ENCODE measurements at regions of chr2 and their contacts with region 1.

Region 1: GRCh38 chr2:191677646-191678436 is at the start of gene NABP1:
- DNase-seq: peak; percentile 98
- H3K4me3 Mint-ChIP-seq: peak within 1 kb of the TSS; percentile 94
- H3K27ac Mint-ChIP-seq: peak within 1 kb of the TSS; percentile 98
- H3K4me1 Mint-ChIP-seq: peaks cover 63% of the 10 kb centered on the region
- H3K27me3 Mint-ChIP-seq: no peaks in the 10 kb centered on the region
- total RNA-seq, gene NABP1: 51.0 and 58.4 TPM in 2 replicates

Region 2: DNA sequence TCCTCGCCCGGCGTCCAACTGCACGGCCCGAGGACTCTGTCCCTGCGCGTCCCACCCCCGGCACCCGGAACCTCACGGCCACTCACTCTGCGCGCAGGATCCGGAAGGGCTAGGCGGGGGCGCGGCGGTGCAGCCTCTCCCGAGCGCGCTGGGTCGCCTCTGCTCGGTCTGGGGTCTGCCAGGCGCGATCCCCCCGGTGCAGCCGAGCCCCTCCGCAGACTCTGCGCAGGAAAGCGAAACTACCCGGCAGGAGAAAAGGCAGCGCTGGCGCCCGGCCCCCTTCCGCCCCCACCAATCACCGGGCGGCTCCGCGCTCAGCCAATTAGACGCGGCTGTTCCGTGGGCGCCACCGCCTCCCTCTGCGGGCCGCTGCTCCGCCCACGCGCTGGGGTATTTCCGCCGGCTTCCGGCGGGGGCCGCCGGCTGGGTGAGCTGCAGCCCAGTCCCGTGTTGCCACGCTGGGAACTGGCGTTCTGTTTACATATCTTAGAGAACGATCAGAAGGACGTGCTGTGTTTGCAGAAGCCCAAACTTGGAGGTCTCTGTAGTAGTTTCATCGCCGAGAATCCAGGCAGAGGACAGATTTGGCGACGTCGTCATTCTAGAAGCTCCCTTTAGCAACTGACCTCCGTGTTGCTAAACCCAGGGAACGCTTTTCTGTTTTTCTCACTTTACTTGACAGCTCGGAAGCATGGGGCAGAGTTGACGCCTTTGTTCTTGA is 663.7 kb before region 1 on chr2 and contains the start of gene STAT1:
- intact Hi-C with region 1: loop called (anchors 2 kb)
- DNase-seq: peak; percentile 97
- H3K4me3 Mint-ChIP-seq: no peak within 1 kb of the TSS
- H3K27ac Mint-ChIP-seq: no peak within 1 kb of the TSS
- H3K4me1 Mint-ChIP-seq: peaks cover 49% of the 10 kb centered on the region
- H3K27me3 Mint-ChIP-seq: no peaks in the 10 kb centered on the region
- total RNA-seq, gene STAT1: 129 and 136 TPM in 2 replicates

Region 3: GRCh38 chr2:191195021-191195420 is 482.8 kb before region 1 on chr2:
- intact Hi-C with region 1: loop called (anchors 2 kb)
- DNase-seq: no peak
- H3K4me3 Mint-ChIP-seq: peak overlapping the region; percentile 28
- H3K27ac Mint-ChIP-seq: peak overlapping the region; percentile 93
- H3K4me1 Mint-ChIP-seq: peaks cover 49% of the 10 kb centered on the region
- H3K27me3 Mint-ChIP-seq: no peaks in the 10 kb centered on the region

Region 4: GRCh38 chr2:191625016-191625415 is 52.8 kb before region 1 on chr2:
- intact Hi-C with region 1: loop called (anchors 2 kb)
- DNase-seq: peak; percentile 34
- H3K4me3 Mint-ChIP-seq: peak overlapping the region; percentile 19
- H3K27ac Mint-ChIP-seq: peak overlapping the region; percentile 42
- H3K4me1 Mint-ChIP-seq: peaks cover 64% of the 10 kb centered on the region
- H3K27me3 Mint-ChIP-seq: no peaks in the 10 kb centered on the region

Region 5: GRCh38 chr2:191691016-191691735 is 13.3 kb after region 1 on chr2:
- intact Hi-C with region 1: loop called (anchors 1 kb)
- DNase-seq: peak; percentile 31
- H3K4me3 Mint-ChIP-seq: no peak overlapping the region
- H3K27ac Mint-ChIP-seq: peak overlapping the region; percentile 67
- H3K4me1 Mint-ChIP-seq: peaks cover 60% of the 10 kb centered on the region
- H3K27me3 Mint-ChIP-seq: no peaks in the 10 kb centered on the region

Region 6: DNA sequence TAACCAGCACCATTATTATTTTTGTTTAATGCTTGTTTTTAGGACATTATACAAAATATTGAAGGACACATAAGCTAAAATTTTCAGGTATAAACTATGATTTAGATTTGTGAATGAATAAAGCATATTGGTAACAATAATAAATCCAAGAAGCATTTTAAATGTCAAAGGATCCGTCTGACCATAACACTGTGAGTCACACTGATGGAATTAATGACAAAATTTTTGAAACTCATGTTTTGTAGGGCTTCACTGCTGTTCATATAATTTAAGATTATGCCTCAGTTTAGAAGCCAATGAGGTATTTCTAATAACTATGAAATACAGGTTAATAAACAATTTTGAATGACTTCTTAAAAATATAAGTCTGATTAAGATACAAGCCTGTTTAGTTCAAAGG is 392.3 kb after region 1 on chr2:
- intact Hi-C with region 1: no loop called
- DNase-seq: no peak
- H3K4me3 Mint-ChIP-seq: no peak overlapping the region
- H3K27ac Mint-ChIP-seq: no peak overlapping the region
- H3K4me1 Mint-ChIP-seq: peaks cover 19% of the 10 kb centered on the region
- H3K27me3 Mint-ChIP-seq: peaks cover 26% of the 10 kb centered on the region